ENCODE measurements at regions of chr6 and their contacts with region 1.

Region 1: GRCh38 chr6:108565893-108566292 is 5.2 kb downstream of the FOXO3 start:
- DNase-seq: peak; percentile 90
- H3K4me3 ChIP-seq: peak overlapping the region in 2 of 4 donors; percentile 76 to 89
- H3K27ac ChIP-seq: peak overlapping the region; percentile 96 to 100 (median 99)
- H3K4me1 ChIP-seq: peaks cover 0 to 74% (median 61%) of the 10 kb centered on the region in 4 donors
- H3K27me3 ChIP-seq: no peaks in the 10 kb centered on the region
- CTCF ChIP-seq: no peak
- EP300 ChIP-seq: peak in 2 of 4 donors; percentile 45 to 48
- POLR2A ChIP-seq: no peak

Region 2: DNA sequence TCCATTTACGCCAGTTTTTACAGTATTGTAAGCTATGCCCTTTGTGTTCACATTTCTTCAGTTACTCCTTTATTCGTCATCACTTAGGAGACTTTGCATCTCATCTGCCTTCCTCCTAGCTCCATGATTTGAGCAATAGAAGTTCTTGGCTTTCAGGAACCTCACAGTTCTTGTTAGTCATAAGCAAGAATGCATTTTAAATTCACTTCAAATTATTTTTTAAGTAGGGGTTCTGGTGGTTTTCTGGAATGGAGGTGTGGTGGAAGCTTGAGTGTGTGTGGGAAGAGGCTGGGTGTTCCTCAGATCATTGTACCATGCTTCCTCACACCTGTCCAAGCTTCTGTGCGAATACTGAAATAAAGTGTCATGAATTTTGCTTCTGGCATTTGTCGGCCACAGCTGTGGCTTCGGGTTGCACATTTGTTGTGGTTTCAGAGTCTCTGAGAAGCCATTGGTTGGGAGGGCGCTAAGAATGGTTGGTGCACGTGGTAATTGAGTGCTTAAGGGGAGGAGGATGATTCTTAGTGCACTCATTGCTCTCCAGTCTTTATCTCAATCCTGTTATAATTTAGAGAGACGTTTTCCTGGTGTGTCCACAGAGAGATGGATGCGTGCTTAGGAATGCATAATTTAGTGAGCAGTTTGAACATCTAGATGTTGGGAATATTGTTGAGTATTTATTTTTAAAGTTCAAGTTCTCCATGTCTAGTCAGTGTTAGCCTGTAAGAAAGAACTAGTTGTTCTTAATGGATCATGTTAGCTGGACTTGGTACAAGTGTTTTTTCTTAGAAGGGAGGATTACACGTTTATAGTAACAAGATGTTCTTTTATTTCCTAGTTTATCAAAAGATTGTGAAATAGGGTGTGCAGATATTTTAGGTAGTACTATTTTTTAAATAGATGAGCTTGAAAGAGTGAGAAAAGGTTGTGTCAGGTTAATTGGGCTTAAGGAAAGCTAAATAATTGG is 26.8 kb after region 1 on chr6:
- intact Hi-C with region 1: loop called (anchors 2 kb)
- DNase-seq: peak; percentile 81
- H3K4me3 ChIP-seq: no peak overlapping the region
- H3K27ac ChIP-seq: peak overlapping the region; percentile 81 to 90 (median 86)
- H3K4me1 ChIP-seq: peaks cover 2 to 100% (median 98%) of the 10 kb centered on the region in 4 donors
- H3K27me3 ChIP-seq: no peaks in the 10 kb centered on the region
- CTCF ChIP-seq: no peak
- EP300 ChIP-seq: peak in 2 of 4 donors; percentile 74 to 90
- POLR2A ChIP-seq: no peak

Measured in sigmoid colon (tissue), 7 donors.